CD8-positive, alpha-beta memory T cell (primary cell): ENCODE measurements at regions of chr4 and their contacts with region 1.

Region 1: GRCh38 chr4:112523764-112524505 is 8.0 kb upstream of the NEUROG2 start:
- DNase-seq: peak; percentile 62 to 79 (median 70)
- H3K4me3 ChIP-seq: peak overlapping the region; percentile 68
- H3K4me3 Mint-ChIP-seq: peak overlapping the region; percentile 80 to 91 (median 83)
- H3K27ac ChIP-seq: no peak overlapping the region
- H3K27ac Mint-ChIP-seq: no peak overlapping the region
- H3K4me1 ChIP-seq: peaks cover 15% of the 10 kb centered on the region
- H3K4me1 Mint-ChIP-seq: peaks cover 15 to 40% (median 38%) of the 10 kb centered on the region in 3 donors
- H3K27me3 ChIP-seq: peaks cover 51% of the 10 kb centered on the region
- H3K27me3 Mint-ChIP-seq: peaks cover 39 to 65% of the 10 kb centered on the region in 2 donors

Region 2: GRCh38 chr4:112099701-112100297 is 424.1 kb before region 1 on chr4:
- CTCF ChIA-PET with region 1: interaction called, 15 read pairs
- POLR2A ChIA-PET with region 1: no interaction called
- DNase-seq: peak in 2 of 5 donors; percentile 18 to 50
- H3K4me3 ChIP-seq: no peak overlapping the region
- H3K4me3 Mint-ChIP-seq: no peak overlapping the region
- H3K27ac ChIP-seq: no peak overlapping the region
- H3K27ac Mint-ChIP-seq: no peak overlapping the region
- H3K4me1 ChIP-seq: no peaks in the 10 kb centered on the region
- H3K4me1 Mint-ChIP-seq: no peaks in the 10 kb centered on the region
- H3K27me3 ChIP-seq: no peaks in the 10 kb centered on the region
- H3K27me3 Mint-ChIP-seq: peaks cover 0 to 10% of the 10 kb centered on the region in 2 donors

Region 3: GRCh38 chr4:112327965-112328733 is 195.8 kb before region 1 on chr4:
- CTCF ChIA-PET with region 1: interaction called, 21 read pairs
- POLR2A ChIA-PET with region 1: interaction called, 3 read pairs
- DNase-seq: peak in 2 of 5 donors; percentile 9 to 28
- H3K4me3 ChIP-seq: no peak overlapping the region
- H3K4me3 Mint-ChIP-seq: peak overlapping the region in 6 of 7 donors; percentile 58 to 84 (median 64)
- H3K27ac ChIP-seq: no peak overlapping the region
- H3K27ac Mint-ChIP-seq: peak overlapping the region in 3 of 8 donors; percentile 0 to 91 (median 1)
- H3K4me1 ChIP-seq: no peaks in the 10 kb centered on the region
- H3K4me1 Mint-ChIP-seq: peaks cover 6 to 9% (median 8%) of the 10 kb centered on the region in 3 donors
- H3K27me3 ChIP-seq: no peaks in the 10 kb centered on the region
- H3K27me3 Mint-ChIP-seq: no peaks in the 10 kb centered on the region

Region 4: DNA sequence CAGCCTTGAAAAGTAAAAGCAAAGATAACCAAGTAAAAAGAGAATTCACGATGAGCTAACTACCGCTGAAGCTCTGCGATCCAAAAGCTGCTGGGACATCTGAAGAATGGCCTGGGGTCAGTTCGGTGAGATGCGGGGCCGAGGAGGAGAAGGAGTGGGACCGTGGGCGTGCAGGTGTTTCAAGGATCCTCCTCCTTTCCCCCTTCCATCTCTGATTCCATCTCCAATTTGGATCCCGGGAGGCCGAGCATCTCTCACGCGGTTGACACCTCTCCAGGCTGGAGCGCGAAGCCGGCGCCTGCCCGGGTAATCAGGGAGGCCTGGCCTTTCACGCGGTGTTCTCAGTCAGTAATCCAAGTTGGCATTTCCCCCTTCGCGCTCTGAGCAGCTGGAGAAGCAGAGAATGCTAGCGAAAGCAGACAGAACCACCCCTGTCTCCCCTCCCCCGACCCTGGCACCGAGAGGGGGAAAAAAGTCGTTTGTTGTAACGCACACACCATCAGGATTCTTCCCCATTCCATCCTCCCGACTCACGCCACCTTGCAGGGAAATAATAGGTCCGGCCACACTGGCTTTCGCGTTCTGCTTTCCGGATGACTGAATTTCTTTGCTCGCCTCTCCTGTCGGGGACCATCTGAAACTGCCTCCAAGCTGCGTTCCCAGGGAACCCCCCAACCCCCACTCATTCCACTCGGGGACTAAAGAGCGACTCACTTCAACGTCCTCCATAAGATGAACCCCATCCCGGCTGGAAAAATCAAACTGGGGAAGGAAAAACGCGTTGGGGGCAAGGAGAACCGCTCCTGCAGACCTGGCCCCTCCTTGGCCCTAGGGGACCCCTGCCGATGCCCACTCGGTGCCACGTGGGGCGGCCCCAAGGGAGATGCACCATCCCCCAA is 14.4 kb before region 1 on chr4:
- CTCF ChIA-PET with region 1: interaction called, 55 read pairs
- POLR2A ChIA-PET with region 1: interaction called, 3 read pairs
- DNase-seq: no peak
- H3K4me3 ChIP-seq: no peak overlapping the region
- H3K4me3 Mint-ChIP-seq: peak overlapping the region; percentile 15 to 73 (median 67)
- H3K27ac ChIP-seq: no peak overlapping the region
- H3K27ac Mint-ChIP-seq: peak overlapping the region in 2 of 8 donors; percentile 46 to 64
- H3K4me1 ChIP-seq: peaks cover 27% of the 10 kb centered on the region
- H3K4me1 Mint-ChIP-seq: peaks cover 34 to 40% (median 40%) of the 10 kb centered on the region in 3 donors
- H3K27me3 ChIP-seq: peaks cover 67% of the 10 kb centered on the region
- H3K27me3 Mint-ChIP-seq: peaks cover 66 to 86% of the 10 kb centered on the region in 2 donors

Region 5: DNA sequence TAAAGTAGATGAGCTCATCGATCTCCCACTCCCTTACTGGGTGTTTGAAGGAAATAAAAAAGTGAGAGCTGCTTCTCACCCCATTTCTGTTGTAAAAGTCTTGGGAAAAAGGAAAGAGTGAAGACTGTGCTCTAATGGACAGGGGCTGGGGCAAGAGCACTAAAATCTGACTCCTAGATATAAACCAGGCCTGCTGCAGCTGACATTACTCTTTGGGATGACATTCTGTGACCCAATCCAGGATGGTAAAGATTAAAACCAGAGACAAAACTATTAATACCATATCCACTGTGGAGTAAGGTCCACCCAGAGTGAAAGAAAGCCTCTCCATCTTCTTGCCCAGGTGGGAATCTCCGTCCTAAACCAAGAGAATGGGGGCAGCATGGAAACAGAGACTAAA is 12.2 kb after region 1 on chr4:
- CTCF ChIA-PET with region 1: interaction called, 16 read pairs
- POLR2A ChIA-PET with region 1: no interaction called
- DNase-seq: no peak
- H3K4me3 ChIP-seq: no peak overlapping the region
- H3K4me3 Mint-ChIP-seq: no peak overlapping the region
- H3K27ac ChIP-seq: no peak overlapping the region
- H3K27ac Mint-ChIP-seq: no peak overlapping the region
- H3K4me1 ChIP-seq: no peaks in the 10 kb centered on the region
- H3K4me1 Mint-ChIP-seq: no peaks in the 10 kb centered on the region
- H3K27me3 ChIP-seq: no peaks in the 10 kb centered on the region
- H3K27me3 Mint-ChIP-seq: peaks cover 5 to 16% of the 10 kb centered on the region in 2 donors

Region 6: GRCh38 chr4:112648263-112649054 is 124.5 kb after region 1 on chr4:
- CTCF ChIA-PET with region 1: no interaction called
- POLR2A ChIA-PET with region 1: no interaction called
- DNase-seq: no peak
- H3K4me3 ChIP-seq: no peak overlapping the region
- H3K4me3 Mint-ChIP-seq: no peak overlapping the region
- H3K27ac ChIP-seq: no peak overlapping the region
- H3K27ac Mint-ChIP-seq: no peak overlapping the region
- H3K4me1 ChIP-seq: no peaks in the 10 kb centered on the region
- H3K4me1 Mint-ChIP-seq: no peaks in the 10 kb centered on the region
- H3K27me3 ChIP-seq: no peaks in the 10 kb centered on the region
- H3K27me3 Mint-ChIP-seq: no peaks in the 10 kb centered on the region